ENCODE measurements at regions of chr1 and their contacts with region 1.

Region 1: DNA sequence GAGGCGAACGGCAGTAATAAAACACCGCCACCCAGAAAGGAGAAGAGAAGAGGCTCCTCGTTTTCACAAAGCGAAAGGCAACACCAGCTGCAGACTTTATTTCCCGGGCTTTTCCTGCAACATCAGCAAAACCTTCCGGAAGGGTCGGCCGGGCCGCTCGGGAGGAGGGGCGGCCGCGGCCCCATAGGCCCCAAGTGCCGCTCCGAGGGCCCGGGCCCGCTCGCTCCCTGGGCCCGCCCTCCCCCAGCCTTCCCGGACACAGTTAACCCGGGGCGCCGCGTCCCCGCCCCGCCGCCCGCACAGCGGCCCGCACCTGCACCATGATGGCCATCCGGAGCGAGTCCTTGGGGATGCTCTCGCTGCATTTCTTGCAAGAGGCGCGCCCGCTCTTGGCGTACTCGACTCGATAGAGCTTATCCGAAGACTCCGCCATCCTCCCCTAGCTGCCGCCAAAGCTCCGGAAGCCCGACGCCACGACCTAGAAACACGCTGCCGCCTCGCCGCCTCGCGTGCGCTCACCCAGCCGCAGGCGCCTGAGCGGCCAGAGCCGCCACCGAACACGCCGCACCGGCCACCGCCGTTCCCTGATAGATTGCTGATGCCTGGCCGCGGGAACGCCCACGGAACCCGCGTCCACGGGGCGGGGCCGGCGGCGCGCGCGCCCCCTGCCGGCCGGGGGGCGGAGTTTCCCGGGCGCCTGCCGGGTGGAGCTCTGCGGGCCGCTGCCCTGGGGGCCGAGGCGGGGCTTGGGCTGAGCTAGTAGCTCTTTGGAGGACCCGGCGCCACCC is at the start of gene PARP1:
- DNase-seq: peak in 1 of 2 experiments; percentile 90
- H3K4me3 ChIP-seq: peak within 1 kb of the TSS; percentile 57 to 99 (median 92)
- H3K27ac ChIP-seq: peak within 1 kb of the TSS; percentile 73
- H3K4me1 ChIP-seq: peaks cover 16 to 30% (median 21%) of the 10 kb centered on the region in 4 experiments
- H3K27me3 ChIP-seq: no peaks in the 10 kb centered on the region
- CTCF ChIP-seq: peak; percentile 54 to 77 (median 61)
- EP300 ChIP-seq: no peak; a peak in 1 of 3 replicates
- POLR2A ChIP-seq: peak in 1 of 2 experiments; percentile 70; a peak in 1 of 3 replicates
- RAD21 ChIP-seq: peak in 1 of 2 experiments; percentile 34; a peak in 1 of 4 replicates
- total RNA-seq, gene PARP1: 408 and 416 TPM in 2 replicates

Region 2: GRCh38 chr1:226261817-226262216 is 145.9 kb before region 1 on chr1:
- CTCF ChIA-PET with region 1: no interaction called
- POLR2A ChIA-PET with region 1: no interaction called
- DNase-seq: no peak
- H3K4me3 ChIP-seq: no peak overlapping the region
- H3K27ac ChIP-seq: no peak overlapping the region
- H3K4me1 ChIP-seq: no peaks in the 10 kb centered on the region
- H3K27me3 ChIP-seq: no peaks in the 10 kb centered on the region
- CTCF ChIP-seq: no peak
- EP300 ChIP-seq: no peak
- POLR2A ChIP-seq: no peak
- RAD21 ChIP-seq: no peak

Region 3: DNA sequence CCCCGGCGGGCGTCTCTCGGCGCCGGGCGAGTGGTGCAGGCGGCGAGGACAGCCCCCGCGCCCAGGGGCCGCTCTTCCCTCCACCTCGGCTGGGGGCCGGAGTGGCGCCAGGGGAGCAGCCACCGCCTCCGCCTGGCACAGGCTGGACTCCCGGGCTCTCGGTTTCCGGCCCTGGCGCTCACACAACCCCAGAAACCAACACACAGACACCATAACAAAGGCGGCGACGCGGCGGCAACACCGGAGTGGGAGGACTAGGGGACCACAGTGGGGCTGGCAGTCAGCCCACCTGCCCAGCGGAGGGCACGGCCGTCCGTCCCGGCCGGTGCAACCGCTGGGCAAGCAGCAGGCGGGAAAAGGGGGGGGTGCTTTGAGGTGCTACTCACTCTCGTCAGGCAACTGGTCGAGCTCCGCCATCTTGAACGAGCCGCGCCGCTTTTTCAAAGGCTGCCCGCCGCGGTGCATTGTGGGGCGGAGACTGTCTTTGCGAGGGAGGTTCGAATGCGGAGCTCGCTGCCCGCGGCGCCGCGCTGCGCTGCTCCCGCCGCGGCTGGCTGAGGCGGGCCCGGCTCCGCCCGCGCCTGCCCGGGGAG is 98.9 kb before region 1 on chr1 and contains the start of gene LIN9:
- CTCF ChIA-PET with region 1: interaction called, 3 read pairs
- POLR2A ChIA-PET with region 1: interaction called, 13 read pairs
- DNase-seq: peak; percentile 77 to 98
- H3K4me3 ChIP-seq: peak within 1 kb of the TSS; percentile 96 to 100 (median 96)
- H3K27ac ChIP-seq: peak within 1 kb of the TSS; percentile 99
- H3K4me1 ChIP-seq: peaks cover 0 to 12% (median 11%) of the 10 kb centered on the region in 4 experiments; a peak in 6 of 7 replicates
- H3K27me3 ChIP-seq: peaks cover 0 to 12% (median 9%) of the 10 kb centered on the region in 4 experiments; a peak in 5 of 7 replicates
- CTCF ChIP-seq: no peak
- EP300 ChIP-seq: peak in 1 of 2 experiments; percentile 3; a peak in 1 of 3 replicates
- POLR2A ChIP-seq: peak; percentile 88
- RAD21 ChIP-seq: no peak
- total RNA-seq, gene LIN9: 12.4 and 12.6 TPM in 2 replicates

Region 4: DNA sequence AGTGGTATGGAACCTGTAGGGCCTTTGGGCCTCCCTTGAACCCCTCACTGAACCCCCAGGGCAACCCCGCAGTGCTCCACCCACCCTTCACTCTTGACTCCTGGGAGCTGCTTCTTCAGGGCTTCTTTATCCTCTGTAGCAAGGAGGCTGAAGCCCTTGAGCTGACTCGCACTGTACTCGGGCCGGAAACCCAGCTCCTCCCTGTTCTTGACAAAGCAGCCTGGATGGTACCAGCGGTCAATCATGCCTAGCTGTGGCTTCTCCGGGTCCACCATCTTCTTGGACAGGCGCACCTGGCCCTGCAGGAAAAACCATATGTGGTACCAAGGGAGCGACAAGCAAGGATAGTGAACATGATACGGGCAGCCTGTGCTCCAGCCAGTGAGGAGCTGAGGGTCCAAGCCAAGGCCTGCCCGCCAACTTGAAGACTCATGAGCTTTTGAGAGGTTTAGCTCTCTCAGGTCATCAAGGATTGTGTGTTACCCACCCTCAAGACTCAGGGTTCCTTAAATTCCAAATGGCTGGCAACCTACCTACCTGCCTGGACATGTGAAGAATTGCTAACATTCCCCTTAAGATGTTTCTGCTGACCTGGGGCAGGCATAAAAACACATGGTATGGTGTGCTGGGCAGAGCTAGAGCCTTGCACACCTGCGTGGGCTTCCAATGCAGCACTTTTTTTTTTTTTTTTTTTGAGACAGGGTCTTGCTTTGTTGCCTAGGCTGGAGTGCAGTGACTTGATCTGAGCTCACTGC is 17.2 kb before region 1 on chr1:
- CTCF ChIA-PET with region 1: interaction called, 11 read pairs
- POLR2A ChIA-PET with region 1: interaction called, 11 read pairs
- DNase-seq: no peak
- H3K4me3 ChIP-seq: no peak overlapping the region
- H3K27ac ChIP-seq: no peak overlapping the region
- H3K4me1 ChIP-seq: no peaks in the 10 kb centered on the region
- H3K27me3 ChIP-seq: no peaks in the 10 kb centered on the region
- CTCF ChIP-seq: no peak
- EP300 ChIP-seq: no peak
- POLR2A ChIP-seq: no peak
- RAD21 ChIP-seq: no peak

Region 5: DNA sequence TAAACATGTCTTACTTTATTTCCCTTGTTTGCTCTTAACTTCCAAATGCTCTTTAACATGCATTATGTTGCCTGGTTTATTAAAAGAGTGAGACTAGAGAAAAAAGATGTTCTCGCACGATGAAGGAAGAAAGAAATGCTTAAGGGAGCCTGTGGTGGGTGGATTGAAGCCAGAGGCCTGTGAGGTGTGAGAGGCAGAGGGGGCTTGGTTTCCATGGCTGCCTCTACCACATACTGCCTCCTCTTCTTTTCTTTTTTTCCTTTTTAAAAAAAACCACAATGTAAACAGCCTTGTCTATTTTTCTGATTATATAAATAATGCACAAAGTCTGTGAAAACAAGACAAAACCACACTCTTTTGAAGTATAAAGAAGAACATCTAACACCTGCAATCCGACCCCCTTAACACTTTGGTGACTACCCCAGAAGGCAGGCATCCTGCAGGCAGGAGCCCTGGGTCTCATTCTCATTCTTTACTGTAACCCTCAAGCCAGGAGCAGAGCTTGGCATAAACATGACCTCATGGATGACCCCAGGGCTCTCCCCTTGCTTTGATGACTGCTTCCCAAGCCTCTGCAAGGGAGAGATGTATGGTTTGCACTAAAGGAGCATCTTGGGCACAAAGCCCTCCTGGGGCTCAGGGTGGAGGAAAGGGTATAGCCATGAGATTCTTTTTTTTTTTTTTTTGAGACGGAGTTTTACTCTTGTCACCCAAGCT is 10.3 kb after region 1 on chr1:
- CTCF ChIA-PET with region 1: interaction called, 28 read pairs
- POLR2A ChIA-PET with region 1: interaction called, 8 read pairs
- DNase-seq: peak in 1 of 2 experiments; percentile 46
- H3K4me3 ChIP-seq: no peak overlapping the region
- H3K27ac ChIP-seq: no peak overlapping the region
- H3K4me1 ChIP-seq: 0 out of 7 replicates have a peak, but pooled peaks cover 0 to 2% (median 0%) of the 10 kb centered on the region in 4 experiments
- H3K27me3 ChIP-seq: no peaks in the 10 kb centered on the region
- CTCF ChIP-seq: no peak
- EP300 ChIP-seq: no peak
- POLR2A ChIP-seq: no peak
- RAD21 ChIP-seq: no peak

Region 6: DNA sequence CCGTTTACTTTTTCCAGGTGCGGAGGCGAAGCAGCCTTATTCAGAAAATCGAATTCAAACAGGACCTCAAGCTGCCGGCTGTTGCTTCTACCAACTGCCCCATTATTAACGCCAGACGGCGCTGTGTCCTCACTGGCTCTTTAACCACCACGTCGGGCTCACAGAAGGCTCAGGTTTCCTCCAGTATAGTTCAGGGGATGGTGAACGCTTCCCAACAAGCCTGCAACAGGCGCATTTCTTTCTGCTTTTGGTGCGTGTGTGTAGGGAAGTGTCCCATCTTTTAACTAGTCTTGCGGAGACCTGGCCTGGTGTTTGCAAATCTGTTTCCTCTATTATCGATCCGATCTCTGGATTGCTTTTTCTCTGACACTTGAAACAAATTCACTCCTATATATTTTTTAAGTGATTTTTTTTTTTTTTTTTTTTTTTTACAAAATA is 140.1 kb after region 1 on chr1:
- CTCF ChIA-PET with region 1: interaction called, 12 read pairs
- POLR2A ChIA-PET with region 1: interaction called, 4 read pairs
- DNase-seq: peak; percentile 80 to 81
- H3K4me3 ChIP-seq: peak overlapping the region in 2 of 4 experiments; percentile 13 to 62; a peak in 5 of 8 replicates
- H3K27ac ChIP-seq: no peak overlapping the region
- H3K4me1 ChIP-seq: peaks cover 3 to 24% (median 14%) of the 10 kb centered on the region in 4 experiments
- H3K27me3 ChIP-seq: peaks cover 10 to 50% (median 46%) of the 10 kb centered on the region in 4 experiments
- CTCF ChIP-seq: peak; percentile 85 to 96 (median 93)
- EP300 ChIP-seq: peak in 1 of 2 experiments; percentile 29; a peak in 1 of 3 replicates
- POLR2A ChIP-seq: no peak
- RAD21 ChIP-seq: peak; percentile 85 to 92